ENCODE measurements at regions of chr3 and their contacts with region 1.

Region 1: DNA sequence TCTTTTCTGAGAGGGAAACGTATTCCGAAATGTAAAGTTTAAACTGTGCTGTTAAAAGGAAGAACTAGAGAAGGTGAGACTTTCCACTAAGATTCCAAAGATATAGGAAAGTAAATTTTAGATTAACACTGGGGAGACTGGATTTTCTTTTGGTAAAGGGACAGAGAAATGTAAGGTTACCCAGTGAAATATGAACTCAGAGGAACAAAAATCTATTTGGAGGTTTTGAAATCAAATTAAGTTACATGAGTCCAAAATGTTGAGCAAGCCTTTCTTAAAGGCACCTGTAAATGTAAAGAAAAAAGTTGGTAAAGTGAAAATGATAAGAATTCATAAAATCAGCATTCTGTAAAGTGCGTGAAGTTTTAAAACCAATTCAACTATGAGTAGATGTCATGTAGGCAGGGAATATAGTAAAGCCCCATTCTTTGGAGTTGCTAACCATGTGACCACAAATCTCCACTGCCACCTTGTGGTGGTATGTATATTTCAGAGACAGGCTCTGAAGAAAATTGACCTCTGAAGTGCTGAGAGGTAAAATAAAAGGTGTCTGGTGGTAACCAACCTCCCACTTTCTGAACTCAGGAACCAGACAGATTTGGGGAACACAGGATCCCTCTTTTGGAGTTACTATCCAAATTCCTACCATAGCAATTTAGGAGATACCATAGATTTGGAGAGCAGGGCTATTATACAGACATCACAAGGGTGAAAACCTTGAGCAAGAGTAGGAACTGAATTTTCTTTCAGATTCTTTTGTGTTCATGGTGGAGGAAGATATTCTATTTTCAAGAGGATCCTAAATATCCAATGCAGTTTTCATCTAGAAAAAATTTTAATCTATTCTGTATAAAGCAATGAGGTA is 215.3 kb downstream of the ROBO2 start:
- DNase-seq: peak; percentile 50 to 70 (median 53)
- ATAC-seq: peak; percentile 89
- H3K4me3 ChIP-seq: no peak overlapping the region
- H3K27ac ChIP-seq: no peak overlapping the region
- H3K4me1 ChIP-seq: no peaks in the 10 kb centered on the region
- H3K27me3 ChIP-seq: no peaks in the 10 kb centered on the region
- CTCF ChIP-seq: peak; percentile 50 to 85 (median 70)
- POLR2A ChIP-seq: no peak

Region 2: GRCh38 chr3:77039606-77040171 is 215.5 kb before region 1 on chr3 and contains the start of gene ROBO2:
- intact Hi-C with region 1: loop called (anchors 10 kb)
- DNase-seq: peak; percentile 11 to 44 (median 19)
- ATAC-seq: peak; percentile 28
- H3K4me3 ChIP-seq: peak within 1 kb of the TSS in 1 of 2 donors; percentile 19
- H3K27ac ChIP-seq: no peak within 1 kb of the TSS
- H3K4me1 ChIP-seq: peaks cover 19% of the 10 kb centered on the region
- H3K27me3 ChIP-seq: peaks cover 0 to 11% of the 10 kb centered on the region in 2 donors
- CTCF ChIP-seq: no peak
- POLR2A ChIP-seq: no peak
- total RNA-seq, gene ROBO2: 1.3 to 3.0 TPM